Transverse colon (tissue), 4 donors: ENCODE measurements at regions of chr5 and their contacts with region 1.

Region 1: GRCh38 chr5:79173626-79174025 is 62.0 kb downstream of the BHMT start:
- DNase-seq: no peak
- H3K4me3 ChIP-seq: no peak overlapping the region
- H3K27ac ChIP-seq: peak overlapping the region in 1 of 4 donors; percentile 23
- H3K4me1 ChIP-seq: peaks cover 5 to 30% (median 11%) of the 10 kb centered on the region in 4 donors
- H3K27me3 ChIP-seq: no peaks in the 10 kb centered on the region
- CTCF ChIP-seq: no peak
- EP300 ChIP-seq: no peak
- POLR2A ChIP-seq: no peak

Region 2: DNA sequence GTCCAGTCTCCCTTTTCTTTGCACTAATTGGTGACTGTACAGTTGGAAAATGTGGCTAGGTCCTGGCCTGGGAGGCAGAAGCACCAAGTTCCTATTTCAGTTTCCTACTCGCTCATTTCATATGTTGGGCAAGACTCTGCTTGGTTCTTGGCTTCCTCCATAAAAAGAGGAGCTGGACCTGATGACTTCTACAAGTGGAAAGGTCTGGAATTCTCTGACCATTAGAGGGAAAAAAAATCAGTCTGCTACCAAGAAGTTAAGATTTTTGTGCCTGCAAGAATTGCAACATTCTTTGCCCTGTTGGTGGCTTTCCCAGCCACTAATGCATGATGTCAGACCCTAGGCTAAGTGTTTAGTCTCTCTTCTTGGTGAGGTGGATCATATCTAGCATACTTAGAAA is 1773.0 kb before region 1 on chr5:
- in situ Hi-C with region 1: no loop called
- intact Hi-C with region 1: loop called (anchors 5 kb)
- DNase-seq: no peak
- H3K4me3 ChIP-seq: no peak overlapping the region
- H3K27ac ChIP-seq: no peak overlapping the region
- H3K4me1 ChIP-seq: no peaks in the 10 kb centered on the region
- H3K27me3 ChIP-seq: no peaks in the 10 kb centered on the region
- CTCF ChIP-seq: no peak
- EP300 ChIP-seq: no peak
- POLR2A ChIP-seq: no peak

Region 3: GRCh38 chr5:79109527-79110492 is 63.8 kb before region 1 on chr5:
- in situ Hi-C with region 1: no loop called
- intact Hi-C with region 1: no loop called
- DNase-seq: no peak
- H3K4me3 ChIP-seq: no peak overlapping the region
- H3K27ac ChIP-seq: no peak overlapping the region
- H3K4me1 ChIP-seq: peaks cover 0 to 15% (median 8%) of the 10 kb centered on the region in 4 donors
- H3K27me3 ChIP-seq: peaks cover 53% of the 10 kb centered on the region
- CTCF ChIP-seq: peak in 4 of 5 experiments; percentile 12 to 36 (median 26)
- EP300 ChIP-seq: no peak
- POLR2A ChIP-seq: no peak

Region 4: DNA sequence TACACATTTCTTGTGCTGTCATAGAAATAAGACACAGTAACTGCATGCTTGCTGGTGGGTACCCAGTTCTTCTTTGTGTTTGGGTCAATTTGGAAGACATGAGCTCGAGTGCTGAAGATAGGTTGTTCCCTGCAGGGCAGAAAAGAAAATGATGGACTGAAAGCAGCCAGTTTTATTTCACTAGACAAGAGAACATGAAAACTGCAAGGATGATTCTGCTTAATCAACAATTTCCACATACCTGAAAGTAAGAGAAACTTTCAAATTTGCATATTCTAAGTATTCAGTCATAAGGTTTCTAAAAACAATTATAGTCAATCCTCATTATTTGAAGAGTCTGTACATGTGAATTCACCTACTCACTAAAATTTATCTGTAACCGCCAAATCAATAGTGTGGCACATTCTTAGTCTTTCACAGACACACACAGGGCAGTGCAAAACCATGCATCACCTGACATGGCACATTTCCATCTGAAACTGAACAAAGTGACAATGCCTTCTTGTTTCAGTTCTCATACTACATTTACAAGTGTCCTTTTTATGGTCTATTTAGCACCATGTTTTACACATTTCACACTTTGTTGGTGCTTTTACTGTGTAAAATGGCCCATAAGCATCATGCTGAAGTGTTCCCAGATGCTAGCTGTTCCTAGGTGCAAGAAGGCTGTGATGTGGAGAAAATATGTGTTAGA is 283.4 kb after region 1 on chr5:
- in situ Hi-C with region 1: no loop called
- intact Hi-C with region 1: no loop called
- DNase-seq: no peak
- H3K4me3 ChIP-seq: no peak overlapping the region
- H3K27ac ChIP-seq: no peak overlapping the region
- H3K4me1 ChIP-seq: no peaks in the 10 kb centered on the region
- H3K27me3 ChIP-seq: no peaks in the 10 kb centered on the region
- CTCF ChIP-seq: no peak
- EP300 ChIP-seq: no peak
- POLR2A ChIP-seq: no peak